B cell (primary cell): ENCODE measurements at regions of chr15 and their contacts with region 1.

Region 1: GRCh38 chr15:91271565-91272153 is 171.6 kb downstream of the SV2B start:
- DNase-seq: peak; percentile 74
- ATAC-seq: peak; percentile 33
- H3K4me3 ChIP-seq: no peak overlapping the region
- H3K4me3 Mint-ChIP-seq: no peak overlapping the region
- H3K27ac ChIP-seq: no peak overlapping the region
- H3K27ac Mint-ChIP-seq: no peak overlapping the region
- H3K4me1 ChIP-seq: peaks cover 0 to 4% of the 10 kb centered on the region in 2 donors
- H3K4me1 Mint-ChIP-seq: peaks cover 4% of the 10 kb centered on the region
- H3K27me3 ChIP-seq: peaks cover 0 to 6% (median 3%) of the 10 kb centered on the region in 4 experiments
- H3K27me3 Mint-ChIP-seq: peaks cover 40% of the 10 kb centered on the region
- CTCF ChIP-seq: peak; percentile 87

Region 2: DNA sequence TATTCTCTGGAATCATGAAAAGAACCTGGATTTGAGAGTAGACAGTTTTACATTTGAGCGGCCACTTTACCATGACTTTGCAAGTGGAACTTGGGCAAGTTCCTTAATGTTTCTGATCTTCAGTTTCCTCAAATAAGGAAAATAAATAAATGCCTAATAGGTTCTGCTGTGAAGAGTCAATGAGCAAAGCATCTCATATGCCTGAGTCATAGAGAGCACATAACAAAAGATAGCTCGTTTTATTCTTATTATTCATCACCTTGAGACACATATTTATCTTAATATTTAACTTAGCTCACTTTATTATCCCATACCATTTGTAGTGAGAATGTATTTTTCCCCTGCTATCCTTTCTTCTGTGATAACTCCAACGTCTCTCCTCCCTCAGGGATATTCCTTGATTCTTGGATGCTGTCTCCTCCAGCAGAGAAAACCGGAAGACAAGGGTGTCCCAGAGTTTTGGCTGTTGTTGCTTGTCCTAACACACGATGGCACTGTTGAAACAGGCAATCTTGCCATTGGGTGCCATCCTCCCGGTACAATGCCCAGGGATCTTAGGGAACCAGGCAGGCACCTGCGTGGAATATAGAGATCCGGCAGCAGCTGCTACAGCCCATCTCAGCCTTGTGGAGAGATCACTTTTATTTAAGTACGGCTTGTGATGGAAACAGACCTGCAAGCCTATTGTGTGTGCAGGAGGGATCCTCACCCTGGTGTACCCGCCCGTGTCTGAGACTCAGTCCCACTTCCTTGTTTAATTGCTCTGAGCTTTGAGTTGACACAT is 215.9 kb before region 1 on chr15:
- CTCF ChIA-PET with region 1: interaction called, 34 read pairs
- POLR2A ChIA-PET with region 1: no interaction called
- intact Hi-C with region 1: no loop called
- DNase-seq: peak; percentile 41
- ATAC-seq: peak; percentile 33
- H3K4me3 ChIP-seq: no peak overlapping the region
- H3K4me3 Mint-ChIP-seq: no peak overlapping the region
- H3K27ac ChIP-seq: no peak overlapping the region
- H3K27ac Mint-ChIP-seq: no peak overlapping the region
- H3K4me1 ChIP-seq: peaks cover 5% of the 10 kb centered on the region in 2 donors
- H3K4me1 Mint-ChIP-seq: no peaks in the 10 kb centered on the region
- H3K27me3 ChIP-seq: peaks cover 0 to 28% (median 19%) of the 10 kb centered on the region in 4 experiments
- H3K27me3 Mint-ChIP-seq: peaks cover 75% of the 10 kb centered on the region
- CTCF ChIP-seq: peak; percentile 62

Region 3: GRCh38 chr15:91124146-91124545 is 147.5 kb before region 1 on chr15:
- CTCF ChIA-PET with region 1: no interaction called
- POLR2A ChIA-PET with region 1: interaction called, 14 read pairs
- intact Hi-C with region 1: no loop called
- DNase-seq: no peak
- ATAC-seq: no peak
- H3K4me3 ChIP-seq: no peak overlapping the region
- H3K4me3 Mint-ChIP-seq: no peak overlapping the region
- H3K27ac ChIP-seq: no peak overlapping the region
- H3K27ac Mint-ChIP-seq: no peak overlapping the region
- H3K4me1 ChIP-seq: no peaks in the 10 kb centered on the region
- H3K4me1 Mint-ChIP-seq: no peaks in the 10 kb centered on the region
- H3K27me3 ChIP-seq: peaks cover 0 to 20% (median 0%) of the 10 kb centered on the region in 4 experiments
- H3K27me3 Mint-ChIP-seq: peaks cover 50% of the 10 kb centered on the region
- CTCF ChIP-seq: no peak

Region 4: GRCh38 chr15:91238644-91239425 is 32.8 kb before region 1 on chr15:
- CTCF ChIA-PET with region 1: no interaction called
- POLR2A ChIA-PET with region 1: no interaction called
- intact Hi-C with region 1: no loop called
- DNase-seq: no peak
- ATAC-seq: no peak
- H3K4me3 ChIP-seq: no peak overlapping the region
- H3K4me3 Mint-ChIP-seq: no peak overlapping the region
- H3K27ac ChIP-seq: no peak overlapping the region
- H3K27ac Mint-ChIP-seq: no peak overlapping the region
- H3K4me1 ChIP-seq: no peaks in the 10 kb centered on the region
- H3K4me1 Mint-ChIP-seq: no peaks in the 10 kb centered on the region
- H3K27me3 ChIP-seq: peaks cover 0 to 11% (median 4%) of the 10 kb centered on the region in 4 experiments
- H3K27me3 Mint-ChIP-seq: peaks cover 39% of the 10 kb centered on the region
- CTCF ChIP-seq: no peak

Region 5: DNA sequence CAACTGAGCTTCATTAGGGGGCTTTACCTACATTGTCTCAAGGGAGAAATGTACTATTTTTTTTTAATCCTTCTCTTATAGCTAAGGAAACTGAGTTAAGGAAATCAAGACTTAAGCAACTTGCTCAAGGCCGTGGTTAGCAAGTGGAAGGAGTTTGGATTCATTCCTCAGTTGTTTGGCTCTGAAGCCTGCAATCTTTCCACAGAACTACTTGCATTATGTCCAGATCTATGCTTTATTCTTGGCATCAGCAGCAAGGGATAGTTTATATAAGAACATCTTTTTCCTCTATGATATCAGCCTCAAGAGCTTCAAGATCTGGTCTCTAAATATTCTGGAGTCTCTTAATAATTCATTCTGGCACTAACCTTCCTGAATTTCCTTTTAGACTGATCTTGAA is 10.8 kb after region 1 on chr15:
- CTCF ChIA-PET with region 1: interaction called, 11 read pairs
- POLR2A ChIA-PET with region 1: no interaction called
- intact Hi-C with region 1: no loop called
- DNase-seq: no peak
- ATAC-seq: no peak
- H3K4me3 ChIP-seq: no peak overlapping the region
- H3K4me3 Mint-ChIP-seq: no peak overlapping the region
- H3K27ac ChIP-seq: no peak overlapping the region
- H3K27ac Mint-ChIP-seq: no peak overlapping the region
- H3K4me1 ChIP-seq: no peaks in the 10 kb centered on the region
- H3K4me1 Mint-ChIP-seq: no peaks in the 10 kb centered on the region
- H3K27me3 ChIP-seq: peaks cover 0 to 2% (median 0%) of the 10 kb centered on the region in 4 experiments
- H3K27me3 Mint-ChIP-seq: peaks cover 35% of the 10 kb centered on the region
- CTCF ChIP-seq: no peak